ENCODE measurements at regions of chr15 and their contacts with region 1.

Region 1: DNA sequence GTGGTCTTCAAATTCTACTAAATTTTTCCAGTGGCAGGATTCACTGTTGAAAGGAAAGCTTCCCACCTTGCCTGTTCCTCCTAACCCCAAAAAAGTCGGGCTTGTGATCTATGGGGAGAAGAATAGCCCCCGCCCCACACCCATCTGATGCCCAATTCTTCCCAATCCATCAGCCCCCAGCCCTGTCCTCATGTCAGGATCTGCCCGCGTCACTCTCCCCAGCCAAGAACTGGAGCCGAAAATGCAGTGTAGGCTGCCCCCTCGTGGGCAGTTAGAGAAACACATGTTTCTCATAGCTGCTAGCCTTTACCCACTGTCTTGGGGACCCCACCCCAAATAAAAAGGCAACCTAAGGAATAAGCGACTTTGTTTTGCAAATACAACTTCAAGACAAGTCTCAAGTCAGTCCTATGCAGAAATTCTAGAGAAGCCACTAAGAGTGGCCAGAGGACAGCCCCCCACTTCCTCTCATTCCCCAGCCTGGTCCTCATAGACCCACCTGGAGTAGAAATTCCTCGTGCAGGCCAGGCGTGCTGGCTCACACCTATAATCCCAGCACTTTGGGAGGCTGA is 13.0 kb upstream of the CSK start:
- DNase-seq: no peak
- H3K4me3 ChIP-seq: no peak overlapping the region
- H3K27ac ChIP-seq: no peak overlapping the region
- H3K27me3 ChIP-seq: peaks cover 6% of the 10 kb centered on the region
- CTCF ChIP-seq: peak; percentile 74

Region 2: DNA sequence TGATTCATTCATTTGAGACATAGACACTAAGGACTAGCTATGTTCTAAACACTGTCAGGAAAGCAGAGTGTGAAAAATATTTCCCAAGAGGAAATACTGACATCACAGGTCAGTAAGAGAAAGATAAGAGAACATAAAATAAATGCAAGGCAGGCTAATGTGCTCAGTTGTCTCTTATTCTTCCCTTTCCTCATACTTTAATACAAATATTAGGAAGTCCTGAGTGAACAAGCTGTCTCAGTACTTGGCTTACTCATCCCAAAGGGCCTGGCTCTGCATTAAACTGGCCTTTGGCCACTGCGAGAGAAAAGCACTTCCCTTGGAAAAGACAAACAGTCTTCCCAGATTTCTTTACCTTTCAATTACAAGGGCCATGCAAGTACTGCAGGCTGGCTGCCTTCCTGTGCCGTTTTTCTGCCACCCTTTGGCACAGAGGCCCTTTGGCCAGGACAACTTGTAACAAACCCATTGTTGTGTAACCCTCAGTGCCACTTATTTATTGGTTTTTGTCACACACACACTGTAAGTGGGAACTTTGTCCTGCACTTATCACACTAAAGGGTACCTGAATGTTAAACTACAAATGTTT is 104.7 kb before region 1 on chr15:
- CTCF ChIA-PET with region 1: interaction called, 14 read pairs
- POLR2A ChIA-PET with region 1: no interaction called
- DNase-seq: peak; percentile 30
- H3K4me3 ChIP-seq: no peak overlapping the region
- H3K27ac ChIP-seq: peak overlapping the region; percentile 47
- H3K27me3 ChIP-seq: no peaks in the 10 kb centered on the region
- CTCF ChIP-seq: no peak

Region 3: GRCh38 chr15:74695597-74696397 is 73.1 kb before region 1 on chr15 and contains the start of gene EDC3:
- CTCF ChIA-PET with region 1: no interaction called
- POLR2A ChIA-PET with region 1: no interaction called
- DNase-seq: peak; percentile 23
- H3K4me3 ChIP-seq: peak within 1 kb of the TSS; percentile 93
- H3K27ac ChIP-seq: peak within 1 kb of the TSS; percentile 63
- H3K27me3 ChIP-seq: no peaks in the 10 kb centered on the region
- CTCF ChIP-seq: no peak
- polyA plus RNA-seq, gene EDC3: 37.1 and 43.6 TPM in 2 replicates

Region 4: GRCh38 chr15:74787251-74788041 is 18.6 kb after region 1 on chr15:
- CTCF ChIA-PET with region 1: interaction called, 21 read pairs
- POLR2A ChIA-PET with region 1: no interaction called
- DNase-seq: peak; percentile 37
- H3K4me3 ChIP-seq: no peak overlapping the region
- H3K27ac ChIP-seq: peak overlapping the region; percentile 47
- H3K27me3 ChIP-seq: no peaks in the 10 kb centered on the region
- CTCF ChIP-seq: peak; percentile 71

Region 5: GRCh38 chr15:74799856-74800547 is 31.1 kb after region 1 on chr15:
- CTCF ChIA-PET with region 1: interaction called, 22 read pairs
- POLR2A ChIA-PET with region 1: no interaction called
- DNase-seq: no peak
- H3K4me3 ChIP-seq: no peak overlapping the region
- H3K27ac ChIP-seq: no peak overlapping the region
- H3K27me3 ChIP-seq: no peaks in the 10 kb centered on the region
- CTCF ChIP-seq: peak; percentile 98

Region 6: DNA sequence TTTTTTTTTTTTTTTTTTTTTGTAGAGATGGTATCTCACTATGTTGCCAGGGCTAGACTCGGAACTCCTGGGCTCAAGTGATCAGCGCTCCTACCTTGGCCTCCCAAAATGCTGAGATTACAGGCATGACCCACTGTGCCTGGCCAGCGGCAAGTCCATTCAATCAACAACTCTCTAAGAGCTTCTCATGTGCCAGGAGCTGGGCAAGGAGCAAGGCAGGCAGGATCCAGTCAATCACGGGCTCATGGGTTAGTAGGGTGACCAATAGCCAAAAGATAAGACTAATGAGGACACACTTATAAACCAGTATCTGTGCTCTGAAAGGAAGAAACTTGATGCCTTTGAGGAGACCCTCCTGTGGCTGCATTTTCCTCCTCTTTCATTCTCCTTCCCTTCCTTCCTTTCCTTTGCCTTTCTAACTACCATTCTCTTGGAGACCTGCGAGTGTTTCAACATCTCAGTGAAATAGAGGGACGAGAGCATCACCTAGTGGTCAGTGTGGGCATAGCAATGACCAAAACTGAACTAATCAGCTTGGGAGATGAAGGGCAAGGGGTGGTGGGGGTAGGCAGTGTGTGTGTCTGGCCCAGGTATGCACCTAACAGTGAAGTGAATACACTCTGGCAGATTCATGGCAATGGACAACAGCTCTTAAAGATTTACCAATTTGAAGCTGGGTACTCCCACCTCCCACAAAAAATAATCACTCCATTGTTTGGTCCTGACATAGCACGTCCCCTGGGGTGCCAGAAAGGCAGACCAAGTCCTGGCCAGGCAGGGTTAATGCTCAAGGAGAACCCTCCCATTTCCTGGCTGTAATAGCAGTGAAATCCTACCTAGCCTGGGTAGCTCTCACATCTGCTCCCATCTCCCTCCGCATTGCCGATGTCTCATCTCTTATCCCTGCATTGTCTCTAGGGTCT is 181.5 kb after region 1 on chr15:
- CTCF ChIA-PET with region 1: interaction called, 74 read pairs
- POLR2A ChIA-PET with region 1: no interaction called
- DNase-seq: peak; percentile 21
- H3K4me3 ChIP-seq: no peak overlapping the region
- H3K27ac ChIP-seq: no peak overlapping the region
- H3K27me3 ChIP-seq: peaks cover 5% of the 10 kb centered on the region
- CTCF ChIP-seq: peak; percentile 100

Region 7: GRCh38 chr15:75123395-75123794 is 354.5 kb after region 1 on chr15:
- CTCF ChIA-PET with region 1: no interaction called
- POLR2A ChIA-PET with region 1: no interaction called
- DNase-seq: peak; percentile 37
- H3K4me3 ChIP-seq: no peak overlapping the region
- H3K27ac ChIP-seq: peak overlapping the region; percentile 52
- H3K27me3 ChIP-seq: peaks cover 4% of the 10 kb centered on the region
- CTCF ChIP-seq: no peak

Measured in AG04450 (cell line).